Prostate gland (tissue), 2 donors: ENCODE measurements at regions of chr12 and their contacts with region 1.

Region 1: DNA sequence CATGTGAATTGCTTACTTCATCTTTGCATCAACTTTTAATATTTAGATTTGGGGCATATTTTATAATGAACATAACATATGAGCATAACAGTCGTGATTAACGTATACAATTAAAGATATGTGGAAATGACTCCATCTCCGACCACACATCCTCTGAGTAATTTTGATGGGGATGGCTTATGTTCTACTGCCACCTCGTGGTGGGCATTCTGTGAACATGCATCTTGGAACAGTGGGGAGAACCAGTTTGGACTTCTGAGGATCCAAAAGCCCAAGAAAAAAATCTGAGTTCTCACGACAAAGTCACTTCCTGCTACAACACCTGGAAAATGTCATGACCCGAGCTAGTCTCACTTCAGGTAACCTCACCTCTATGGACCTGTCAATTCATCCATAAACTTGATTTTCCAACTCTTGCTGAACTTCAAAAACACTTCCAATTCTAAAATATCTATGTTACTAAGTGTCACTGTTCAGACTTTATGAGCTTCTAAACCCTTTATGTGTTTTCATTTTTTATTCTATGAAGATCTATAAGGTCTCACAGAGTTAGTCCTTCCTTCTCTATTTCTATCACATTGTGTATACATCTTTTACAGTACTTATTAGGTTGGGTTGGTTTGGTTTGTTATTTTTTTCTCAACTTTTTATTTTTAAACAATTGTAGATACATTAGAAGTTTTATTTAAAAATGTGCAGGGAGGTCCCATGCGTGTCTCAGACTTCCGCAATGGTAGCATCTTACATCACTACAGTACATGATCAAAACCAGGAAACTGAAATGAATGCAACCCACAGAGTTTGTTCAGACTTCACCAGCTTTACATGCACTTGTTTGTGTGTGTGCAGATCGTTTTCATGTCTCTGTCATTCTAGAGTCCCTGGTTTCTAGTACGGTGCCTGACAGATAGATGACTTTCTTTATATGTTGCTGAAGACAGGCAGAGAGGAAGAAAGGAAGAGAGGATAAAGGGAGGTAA is 38.2 kb upstream of the STAB2 start:
- DNase-seq: peak; percentile 42
- H3K4me3 ChIP-seq: no peak overlapping the region
- H3K27ac ChIP-seq: no peak overlapping the region
- H3K4me1 ChIP-seq: no peaks in the 10 kb centered on the region
- H3K27me3 ChIP-seq: no peaks in the 10 kb centered on the region
- CTCF ChIP-seq: peak; percentile 43 to 79 (median 74)
- POLR2A ChIP-seq: no peak

Region 2: DNA sequence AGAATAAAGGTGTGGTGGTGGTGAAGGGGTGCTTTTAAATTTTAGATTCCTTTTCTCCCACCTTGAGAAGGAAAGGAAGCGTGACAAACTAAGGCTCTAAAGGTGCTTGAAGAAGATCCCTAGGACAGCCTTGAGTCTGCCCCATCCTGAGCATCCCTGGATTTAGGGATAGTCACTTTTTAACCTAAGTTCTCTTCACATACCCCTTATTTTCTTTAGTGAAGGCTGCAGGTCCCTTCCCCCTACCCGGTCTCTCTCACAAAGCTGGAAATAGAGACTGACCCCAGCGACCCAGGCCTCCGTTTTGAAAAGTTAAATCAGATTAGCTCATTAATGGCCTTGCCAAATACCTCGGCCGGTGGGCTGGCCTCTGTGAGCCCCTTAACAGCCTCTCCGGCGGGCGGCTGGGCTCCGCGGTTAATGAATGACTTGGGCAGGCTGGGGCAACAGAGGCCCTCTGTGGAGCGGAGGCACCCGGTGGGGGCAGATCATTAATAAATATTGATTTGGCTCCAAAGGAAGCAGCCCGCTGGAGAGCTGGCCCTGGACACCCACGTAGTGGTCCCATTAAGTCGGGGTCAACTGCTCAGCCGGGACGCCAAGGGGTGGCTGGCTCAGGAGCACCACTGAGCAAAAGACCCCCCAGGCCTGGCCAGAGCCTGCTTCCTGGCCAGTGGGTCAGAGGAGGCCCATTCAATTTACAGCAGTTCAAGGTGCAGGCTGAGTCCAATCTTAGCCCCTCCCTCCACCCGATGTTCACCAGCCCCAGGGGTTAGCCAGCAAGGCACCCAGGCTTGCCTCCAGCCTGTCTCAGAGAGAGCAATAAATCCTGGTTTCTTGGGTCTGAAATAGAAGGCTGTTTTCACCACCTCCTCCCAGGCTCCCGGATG is 663.6 kb before region 1 on chr12:
- intact Hi-C with region 1: loop called (anchors 2 kb)
- DNase-seq: no peak
- H3K4me3 ChIP-seq: no peak overlapping the region
- H3K27ac ChIP-seq: no peak overlapping the region
- H3K4me1 ChIP-seq: no peaks in the 10 kb centered on the region
- H3K27me3 ChIP-seq: peaks cover 3% of the 10 kb centered on the region
- CTCF ChIP-seq: no peak
- POLR2A ChIP-seq: no peak

Region 3: GRCh38 chr12:102948941-102949352 is 600.0 kb before region 1 on chr12:
- intact Hi-C with region 1: loop called (anchors 5 kb)
- DNase-seq: no peak
- H3K4me3 ChIP-seq: no peak overlapping the region
- H3K27ac ChIP-seq: no peak overlapping the region
- H3K4me1 ChIP-seq: no peaks in the 10 kb centered on the region
- H3K27me3 ChIP-seq: peaks cover 3% of the 10 kb centered on the region
- CTCF ChIP-seq: peak; percentile 63 to 78 (median 66)
- POLR2A ChIP-seq: no peak

Region 4: GRCh38 chr12:103241184-103241583 is 307.7 kb before region 1 on chr12:
- intact Hi-C with region 1: no loop called
- DNase-seq: no peak
- H3K4me3 ChIP-seq: no peak overlapping the region
- H3K27ac ChIP-seq: no peak overlapping the region
- H3K4me1 ChIP-seq: no peaks in the 10 kb centered on the region
- H3K27me3 ChIP-seq: no peaks in the 10 kb centered on the region
- CTCF ChIP-seq: no peak
- POLR2A ChIP-seq: no peak

Region 5: GRCh38 chr12:103350116-103350515 is 198.8 kb before region 1 on chr12:
- intact Hi-C with region 1: no loop called
- DNase-seq: no peak
- H3K4me3 ChIP-seq: no peak overlapping the region
- H3K27ac ChIP-seq: no peak overlapping the region
- H3K4me1 ChIP-seq: no peaks in the 10 kb centered on the region
- H3K27me3 ChIP-seq: no peaks in the 10 kb centered on the region
- CTCF ChIP-seq: no peak
- POLR2A ChIP-seq: no peak

Region 6: GRCh38 chr12:103529306-103529705 is 19.6 kb before region 1 on chr12:
- intact Hi-C with region 1: no loop called
- DNase-seq: no peak
- H3K4me3 ChIP-seq: no peak overlapping the region
- H3K27ac ChIP-seq: no peak overlapping the region
- H3K4me1 ChIP-seq: no peaks in the 10 kb centered on the region
- H3K27me3 ChIP-seq: peaks cover 2% of the 10 kb centered on the region
- CTCF ChIP-seq: no peak
- POLR2A ChIP-seq: no peak

Region 7: GRCh38 chr12:103586132-103586531 is 37.2 kb after region 1 on chr12:
- intact Hi-C with region 1: no loop called
- DNase-seq: no peak
- H3K4me3 ChIP-seq: no peak overlapping the region
- H3K27ac ChIP-seq: no peak overlapping the region
- H3K4me1 ChIP-seq: no peaks in the 10 kb centered on the region
- H3K27me3 ChIP-seq: no peaks in the 10 kb centered on the region
- CTCF ChIP-seq: no peak
- POLR2A ChIP-seq: no peak